HEK293 (cell line): ENCODE measurements at regions of chr1 and their contacts with region 1.

Region 1: DNA sequence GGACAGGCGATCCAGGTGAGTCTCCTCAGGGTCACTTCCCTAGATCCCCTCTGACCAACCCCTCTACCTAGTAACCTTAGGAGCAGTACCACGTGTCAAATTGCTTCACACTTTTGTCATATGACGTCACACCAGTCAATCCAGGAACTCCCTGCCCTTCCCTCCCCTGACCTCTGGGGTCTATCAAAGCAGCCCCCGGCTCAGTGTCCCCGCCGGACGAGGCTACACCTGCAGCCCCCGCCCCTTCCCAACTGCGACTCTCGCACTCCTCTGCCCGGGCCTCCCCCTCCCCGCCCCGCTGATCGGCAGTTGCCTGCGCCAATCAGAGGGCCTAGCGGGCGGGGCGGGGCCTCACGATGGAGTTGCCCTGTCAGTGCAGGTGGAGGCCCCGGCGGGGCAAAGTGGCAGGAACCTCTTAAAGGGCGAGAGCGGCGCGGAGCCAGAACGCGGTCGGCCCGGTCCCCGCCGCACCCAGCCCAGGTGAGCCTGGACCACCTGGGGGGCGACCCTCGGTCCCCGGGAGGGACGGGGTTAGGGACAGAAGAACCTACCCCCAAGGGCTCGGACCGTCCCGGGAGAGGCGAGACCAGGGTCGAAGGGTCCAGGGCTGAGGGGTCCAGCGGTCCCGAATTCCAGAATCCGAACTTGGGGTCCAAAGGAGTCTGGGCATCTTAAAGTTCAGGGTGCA is 27.5 kb upstream of the EPB41 start:
- H3K4me3 ChIP-seq: peak overlapping the region; percentile 89
- H3K27ac ChIP-seq: peak overlapping the region; percentile 66; the same call in 1 of the 2 replicates
- H3K4me1 ChIP-seq: peaks cover 6% of the 10 kb centered on the region
- CTCF ChIP-seq: no peak

Region 2: GRCh38 chr1:29129916-29130315 is 243.0 kb after region 1 on chr1:
- CTCF ChIA-PET with region 1: interaction called, 11 read pairs
- POLR2A ChIA-PET with region 1: no interaction called
- H3K4me3 ChIP-seq: no peak overlapping the region
- H3K27ac ChIP-seq: no peak overlapping the region
- H3K4me1 ChIP-seq: no peaks in the 10 kb centered on the region
- CTCF ChIP-seq: no peak

Region 3: DNA sequence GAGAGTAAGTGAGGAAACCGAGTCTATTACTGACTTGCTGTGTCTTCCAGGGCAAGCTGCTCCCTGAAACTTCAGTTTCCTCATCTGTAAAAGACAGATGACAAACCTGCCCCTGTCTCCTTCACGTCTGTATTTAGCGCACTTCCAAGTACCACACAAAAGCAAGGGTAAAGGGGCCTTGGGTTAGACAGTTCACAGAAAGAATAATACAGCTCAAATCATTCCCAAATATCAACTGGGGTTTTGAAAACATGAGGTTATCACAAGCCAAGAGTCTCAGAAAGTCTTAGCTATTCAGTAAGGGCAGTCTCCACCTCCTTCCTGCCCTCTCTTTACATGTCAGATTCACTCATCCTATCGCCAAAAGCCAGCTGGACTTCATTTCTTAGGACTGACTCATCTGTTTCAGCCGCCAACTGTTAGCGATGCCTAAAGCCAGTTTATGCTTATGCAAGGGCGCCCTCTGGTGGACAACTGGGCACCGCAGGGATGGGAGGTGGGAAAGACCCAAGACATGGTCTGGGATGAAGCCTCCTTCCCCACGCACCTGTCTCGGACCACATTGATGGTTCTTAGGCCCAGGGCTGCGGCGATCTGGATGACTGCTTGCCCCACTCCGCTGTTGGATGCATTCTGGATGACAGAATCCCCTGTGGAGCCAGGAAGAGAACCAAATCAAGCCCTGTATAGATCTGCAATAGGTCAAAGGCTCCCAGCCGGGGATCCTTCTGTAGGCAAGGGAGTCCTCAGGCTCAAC is 315.9 kb after region 1 on chr1:
- CTCF ChIA-PET with region 1: interaction called, 159 read pairs
- POLR2A ChIA-PET with region 1: interaction called, 8 read pairs
- H3K4me3 ChIP-seq: no peak overlapping the region
- H3K27ac ChIP-seq: no peak overlapping the region
- H3K4me1 ChIP-seq: no peaks in the 10 kb centered on the region
- CTCF ChIP-seq: peak; percentile 89